Caco-2 (cell line): ENCODE measurements at regions of chr12 and their contacts with region 1.

Region 1: DNA sequence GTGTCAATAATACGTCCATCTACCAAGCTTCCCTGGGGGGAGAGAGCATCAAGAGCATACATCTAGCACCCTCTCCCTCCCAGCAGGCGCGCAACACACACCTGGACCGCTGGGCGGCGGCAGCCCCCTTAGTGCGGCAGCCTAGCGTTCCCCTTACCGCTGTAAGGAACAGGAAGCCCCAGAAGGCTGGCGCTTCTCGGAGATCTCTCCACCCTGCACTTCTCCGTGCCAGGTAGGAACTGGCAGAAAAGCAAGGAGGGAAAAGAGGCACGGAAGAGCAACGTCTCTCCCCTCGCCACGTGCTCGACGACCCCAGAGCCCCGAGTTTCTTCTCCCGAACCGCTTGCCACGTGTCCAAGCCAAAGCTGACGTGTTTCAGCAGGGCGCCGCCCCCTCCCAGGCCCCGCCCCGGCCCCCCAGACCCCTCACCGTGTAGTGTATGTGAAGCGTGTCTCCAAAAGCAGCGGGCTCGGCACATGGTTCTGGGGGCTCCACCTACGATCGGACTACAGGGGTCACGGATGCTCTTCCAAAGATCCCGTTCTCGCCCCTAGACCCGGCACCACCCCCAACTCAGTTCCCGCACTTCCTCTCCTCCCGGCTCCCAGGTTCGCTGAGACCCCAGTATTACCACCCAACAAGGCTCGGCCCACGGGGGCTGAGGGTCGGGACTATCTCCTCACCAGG is 532 bp downstream of the FKBP11 start:
- DNase-seq: peak; percentile 81 to 85
- H3K4me3 ChIP-seq: peak overlapping the region; percentile 73
- H3K4me3 Mint-ChIP-seq: peak overlapping the region; percentile 83
- H3K27ac Mint-ChIP-seq: peak overlapping the region; percentile 76
- H3K4me1 ChIP-seq: peaks cover 5% of the 10 kb centered on the region; the same call in 1 of the 2 replicates
- H3K4me1 Mint-ChIP-seq: no peaks in the 10 kb centered on the region
- H3K27me3 ChIP-seq: no peaks in the 10 kb centered on the region
- H3K27me3 Mint-ChIP-seq: no peaks in the 10 kb centered on the region
- CTCF ChIP-seq: peak; percentile 72 to 96

Region 2: DNA sequence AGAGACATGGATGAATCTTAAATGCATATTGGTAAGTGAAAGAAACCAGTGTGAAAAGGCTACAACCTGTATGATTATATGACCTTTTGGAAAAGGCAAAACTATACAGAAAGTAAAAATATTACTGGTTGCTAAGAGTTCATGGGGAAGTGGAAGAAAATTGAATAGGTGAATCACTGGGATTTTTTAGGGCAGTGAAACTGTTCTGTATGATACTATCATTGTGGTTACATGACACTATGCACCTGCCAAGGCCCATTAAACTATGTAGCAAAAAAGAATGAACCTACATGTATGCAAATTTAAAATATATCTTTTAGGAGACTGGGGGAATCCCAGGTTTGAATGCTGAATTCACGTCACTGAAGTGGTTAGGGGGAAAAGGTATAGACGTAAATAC is 411.9 kb before region 1 on chr12:
- CTCF ChIA-PET with region 1: no interaction called
- POLR2A ChIA-PET with region 1: no interaction called
- intact Hi-C with region 1: no loop called
- DNase-seq: no peak
- H3K4me3 ChIP-seq: no peak overlapping the region
- H3K4me3 Mint-ChIP-seq: no peak overlapping the region
- H3K27ac Mint-ChIP-seq: no peak overlapping the region
- H3K4me1 ChIP-seq: no peaks in the 10 kb centered on the region
- H3K4me1 Mint-ChIP-seq: peaks cover under 1% of the 10 kb centered on the region
- H3K27me3 ChIP-seq: no peaks in the 10 kb centered on the region
- H3K27me3 Mint-ChIP-seq: peaks cover 8% of the 10 kb centered on the region
- CTCF ChIP-seq: no peak

Region 3: GRCh38 chr12:48910196-48910595 is 14.6 kb before region 1 on chr12:
- CTCF ChIA-PET with region 1: interaction called, 9 read pairs
- POLR2A ChIA-PET with region 1: interaction called, 7 read pairs
- intact Hi-C with region 1: loop called (anchors 1 kb)
- DNase-seq: peak; percentile 68
- H3K4me3 ChIP-seq: no peak overlapping the region
- H3K4me3 Mint-ChIP-seq: peak overlapping the region; percentile 6
- H3K27ac Mint-ChIP-seq: no peak overlapping the region
- H3K4me1 ChIP-seq: peaks cover 43% of the 10 kb centered on the region
- H3K4me1 Mint-ChIP-seq: peaks cover 23% of the 10 kb centered on the region
- H3K27me3 ChIP-seq: no peaks in the 10 kb centered on the region
- H3K27me3 Mint-ChIP-seq: no peaks in the 10 kb centered on the region
- CTCF ChIP-seq: no peak